PC-9 (cell line): ENCODE measurements at regions of chr5 and their contacts with region 1.

Region 1: GRCh38 chr5:172733131-172733973 is 37.6 kb downstream of the DUSP1 start:
- DNase-seq: peak; percentile 89
- H3K4me3 ChIP-seq: peak overlapping the region; percentile 5; the same call in 1 of the 2 replicates
- H3K27ac ChIP-seq: peak overlapping the region; percentile 96
- H3K4me1 ChIP-seq: peaks cover 44% of the 10 kb centered on the region
- H3K27me3 ChIP-seq: no peaks in the 10 kb centered on the region
- CTCF ChIP-seq: no peak

Region 2: GRCh38 chr5:172758083-172758833 is 24.9 kb after region 1 on chr5:
- CTCF ChIA-PET with region 1: no interaction called
- POLR2A ChIA-PET with region 1: interaction called, 10 read pairs
- intact Hi-C with region 1: loop called (anchors 1 kb)
- DNase-seq: peak; percentile 66 to 92
- H3K4me3 ChIP-seq: peak overlapping the region; percentile 21; the same call in 1 of the 2 replicates
- H3K27ac ChIP-seq: peak overlapping the region; percentile 24
- H3K4me1 ChIP-seq: peaks cover 10% of the 10 kb centered on the region
- H3K27me3 ChIP-seq: no peaks in the 10 kb centered on the region
- CTCF ChIP-seq: no peak; the same call in 1 of the 2 replicates

Region 3: DNA sequence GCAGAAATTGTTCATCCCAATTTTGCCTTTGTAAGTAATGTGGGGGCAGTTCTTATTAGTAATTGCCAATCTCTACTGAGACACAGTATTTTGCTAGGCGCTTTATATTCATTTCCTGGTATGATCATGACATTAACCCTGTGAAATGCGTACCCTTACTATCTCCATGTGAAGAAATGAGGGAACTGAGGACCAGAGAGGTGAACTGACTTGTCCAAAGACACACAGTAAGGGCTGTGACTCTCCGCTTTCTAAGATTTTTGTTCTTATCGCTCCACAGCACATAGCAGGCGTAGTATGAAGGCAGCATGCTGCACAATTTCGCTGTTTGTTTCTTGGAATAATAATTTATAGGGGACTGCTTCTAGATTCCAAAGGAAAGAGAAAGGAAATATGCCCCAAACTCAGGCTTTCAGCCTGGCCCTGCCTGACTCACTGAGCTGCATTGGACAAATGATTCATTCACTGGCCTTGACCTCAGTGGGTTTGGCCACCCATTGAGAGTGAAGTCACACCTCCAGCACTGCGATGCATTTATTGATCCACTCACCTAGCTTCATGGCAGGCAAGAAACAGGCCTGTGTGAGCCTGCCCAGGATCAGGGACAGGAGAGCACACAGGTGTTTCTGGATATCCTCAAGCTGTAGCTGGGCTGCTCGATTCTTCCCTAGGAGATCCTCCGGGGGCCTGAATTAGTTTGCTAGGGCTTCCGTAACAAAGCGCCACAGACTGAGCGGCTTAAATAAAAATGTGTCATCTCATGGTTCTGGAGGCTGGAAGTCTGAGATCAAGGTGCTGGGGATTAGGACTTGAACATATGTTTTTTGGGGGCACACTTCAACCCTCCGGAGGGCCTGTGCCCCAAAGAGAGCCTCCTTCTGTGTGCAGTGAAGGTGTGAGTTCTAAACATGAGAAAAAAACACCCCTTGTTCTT is 44.8 kb after region 1 on chr5:
- CTCF ChIA-PET with region 1: interaction called, 8 read pairs
- POLR2A ChIA-PET with region 1: interaction called, 12 read pairs
- intact Hi-C with region 1: no loop called
- DNase-seq: peak; percentile 59 to 95
- H3K4me3 ChIP-seq: peak overlapping the region; percentile 39; the same call in 1 of the 2 replicates
- H3K27ac ChIP-seq: peak overlapping the region; percentile 100
- H3K4me1 ChIP-seq: peaks cover 74% of the 10 kb centered on the region
- H3K27me3 ChIP-seq: no peaks in the 10 kb centered on the region
- CTCF ChIP-seq: no peak

Region 4: DNA sequence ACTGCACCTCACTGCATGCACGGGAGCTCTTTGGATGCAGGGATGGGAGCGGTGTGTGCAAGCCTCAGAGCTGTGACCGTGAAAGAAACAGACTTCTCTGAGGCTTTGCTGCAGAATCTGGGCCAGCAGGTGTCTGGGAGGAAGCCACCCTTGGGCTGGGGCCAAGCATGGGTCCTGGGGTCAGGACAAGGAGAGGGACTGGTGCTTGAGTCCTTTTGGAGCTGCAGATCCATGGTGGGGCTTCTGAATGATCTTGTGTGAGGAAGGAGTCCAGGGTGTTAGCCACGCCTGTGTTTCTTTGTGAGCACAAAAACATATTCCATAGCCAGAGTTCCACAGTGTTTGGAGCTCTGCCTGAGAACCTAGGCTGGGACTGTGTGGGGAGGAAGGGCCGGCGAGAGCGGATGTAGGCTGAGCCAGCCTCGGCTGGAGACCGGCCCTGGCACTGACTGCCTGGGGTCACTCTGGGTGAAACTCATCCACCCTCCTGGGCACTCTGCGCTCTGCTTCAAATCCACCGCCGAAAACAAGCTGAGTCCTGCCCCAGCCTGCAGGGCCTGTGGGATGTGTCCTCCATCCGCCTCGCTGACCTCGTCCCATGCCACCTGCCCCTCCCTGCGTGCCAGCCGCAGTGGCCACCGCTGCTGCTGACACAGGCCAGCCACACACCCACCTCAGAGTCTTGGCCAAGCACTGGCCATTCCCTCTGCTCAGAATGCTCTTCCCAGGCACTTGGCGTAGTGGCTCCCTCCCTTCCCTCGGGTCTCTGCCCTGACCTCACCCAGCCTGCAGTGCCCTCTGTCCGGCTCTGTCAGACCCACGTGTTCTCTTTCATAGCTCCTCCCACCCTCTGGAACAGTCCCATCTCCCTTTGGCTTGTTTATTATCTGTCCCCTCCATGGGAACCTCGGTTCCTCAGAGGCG is 127.4 kb after region 1 on chr5:
- CTCF ChIA-PET with region 1: interaction called, 4 read pairs
- POLR2A ChIA-PET with region 1: no interaction called
- intact Hi-C with region 1: loop called (anchors 1 kb)
- DNase-seq: peak; percentile 64 to 90
- H3K4me3 ChIP-seq: no peak overlapping the region
- H3K27ac ChIP-seq: peak overlapping the region; percentile 99
- H3K4me1 ChIP-seq: peaks cover 65% of the 10 kb centered on the region
- H3K27me3 ChIP-seq: no peaks in the 10 kb centered on the region
- CTCF ChIP-seq: no peak

Region 5: GRCh38 chr5:172984243-172984953 is 251.0 kb after region 1 on chr5:
- CTCF ChIA-PET with region 1: no interaction called
- POLR2A ChIA-PET with region 1: interaction called, 10 read pairs
- intact Hi-C with region 1: no loop called
- DNase-seq: peak; percentile 63 to 79
- H3K4me3 ChIP-seq: peak overlapping the region; percentile 87
- H3K27ac ChIP-seq: peak overlapping the region; percentile 77
- H3K4me1 ChIP-seq: peaks cover 13% of the 10 kb centered on the region; the same call in 1 of the 2 replicates
- H3K27me3 ChIP-seq: no peaks in the 10 kb centered on the region
- CTCF ChIP-seq: peak; percentile 65

Region 6: DNA sequence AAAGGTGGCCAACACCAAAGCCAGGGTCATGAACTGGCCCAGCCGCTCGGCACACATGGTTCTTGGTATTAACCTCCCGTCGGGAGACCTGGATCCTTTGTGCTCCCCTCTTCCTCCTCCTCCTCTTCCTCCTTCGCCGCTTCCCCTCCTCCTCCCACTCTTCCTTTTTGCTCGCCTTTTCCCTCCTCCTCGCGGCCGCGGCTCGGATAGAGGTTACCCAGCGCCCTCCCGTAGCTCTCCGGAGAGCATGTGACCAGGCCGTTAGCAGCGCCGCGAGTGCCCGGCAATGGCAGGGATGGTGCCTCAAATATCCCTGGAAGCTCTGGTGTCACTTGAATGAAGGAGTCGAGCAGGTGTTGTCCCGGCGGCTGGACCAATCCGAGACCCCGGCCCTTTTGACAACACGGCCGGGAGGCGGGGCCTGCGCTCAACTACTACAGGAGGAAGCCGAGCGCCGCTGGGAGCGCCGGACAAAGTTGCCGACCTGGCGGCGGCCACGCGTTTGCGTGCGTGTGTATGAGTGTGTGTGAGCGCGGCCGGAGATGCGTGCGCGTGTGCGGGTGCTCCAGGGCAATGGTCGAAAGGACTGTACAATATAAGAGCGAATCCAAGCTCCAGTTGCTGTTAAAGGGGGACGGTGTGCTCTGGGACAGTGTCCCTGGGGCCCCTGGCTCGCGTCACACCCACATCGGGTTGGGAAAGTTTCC is 594.9 kb after region 1 on chr5 and contains the start of gene STC2:
- CTCF ChIA-PET with region 1: no interaction called
- POLR2A ChIA-PET with region 1: no interaction called
- intact Hi-C with region 1: no loop called
- DNase-seq: peak; percentile 92 to 96
- H3K4me3 ChIP-seq: peak within 1 kb of the TSS; percentile 72
- H3K27ac ChIP-seq: peak within 1 kb of the TSS; percentile 100
- H3K4me1 ChIP-seq: peaks cover 44% of the 10 kb centered on the region
- H3K27me3 ChIP-seq: no peaks in the 10 kb centered on the region
- CTCF ChIP-seq: no peak
- total RNA-seq, gene STC2: 42.2 and 63.5 TPM in 2 replicates